ENCODE measurements at regions of chr17 and their contacts with region 1.

Region 1: GRCh38 chr17:44141717-44142285 is at the start of gene HROB:
- DNase-seq: peak; percentile 96
- ATAC-seq: peak; percentile 98
- H3K4me3 Mint-ChIP-seq: peak within 1 kb of the TSS; percentile 84
- H3K27ac Mint-ChIP-seq: peak within 1 kb of the TSS; percentile 70
- H3K4me1 Mint-ChIP-seq: peaks cover 15% of the 10 kb centered on the region
- H3K27me3 Mint-ChIP-seq: peaks cover 8% of the 10 kb centered on the region
- CTCF ChIP-seq: no peak
- total RNA-seq, gene HROB: 2.2 and 5.0 TPM in 2 replicates

Region 2: DNA sequence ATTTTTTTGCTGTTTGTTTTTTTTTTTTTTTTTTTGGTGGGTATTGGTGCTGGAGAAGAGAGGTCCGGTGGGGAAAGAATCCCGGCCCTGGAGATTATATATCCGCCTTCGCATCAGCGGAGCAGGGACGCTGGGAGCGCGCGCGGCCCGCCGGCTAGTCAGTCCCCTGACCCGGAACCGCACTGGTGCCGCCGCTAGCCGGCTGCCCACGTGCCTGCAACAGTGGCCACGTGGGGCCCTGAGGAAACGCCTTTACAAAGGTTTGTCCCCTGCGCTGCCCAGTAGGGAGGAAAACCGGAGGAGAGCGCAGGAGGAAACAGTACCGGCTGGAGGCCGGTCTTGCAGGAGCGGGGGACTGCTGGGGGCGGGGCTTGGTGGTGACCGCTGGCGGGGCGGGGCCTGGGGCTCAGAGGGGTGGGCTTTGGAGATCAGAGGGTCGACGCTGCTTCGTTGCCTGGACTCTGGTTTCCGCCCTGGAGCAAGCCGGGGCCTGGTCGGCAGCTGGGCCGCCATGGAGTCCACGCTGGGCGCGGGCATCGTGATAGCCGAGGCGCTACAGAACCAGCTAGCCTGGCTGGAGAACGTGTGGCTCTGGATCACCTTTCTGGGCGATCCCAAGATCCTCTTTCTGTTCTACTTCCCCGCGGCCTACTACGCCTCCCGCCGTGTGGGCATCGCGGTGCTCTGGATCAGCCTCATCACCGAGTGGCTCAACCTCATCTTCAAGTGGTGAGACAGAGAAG is 71.2 kb before region 1 on chr17 and contains the start of gene G6PC3:
- CTCF ChIA-PET with region 1: no interaction called
- POLR2A ChIA-PET with region 1: no interaction called
- intact Hi-C with region 1: loop called (anchors 1 kb)
- DNase-seq: peak; percentile 73
- ATAC-seq: peak; percentile 73
- H3K4me3 Mint-ChIP-seq: peak within 1 kb of the TSS; percentile 97
- H3K27ac Mint-ChIP-seq: peak within 1 kb of the TSS; percentile 95
- H3K4me1 Mint-ChIP-seq: peaks cover 44% of the 10 kb centered on the region
- H3K27me3 Mint-ChIP-seq: no peaks in the 10 kb centered on the region
- CTCF ChIP-seq: no peak
- total RNA-seq, gene G6PC3: 30.9 and 35.2 TPM in 2 replicates

Region 3: DNA sequence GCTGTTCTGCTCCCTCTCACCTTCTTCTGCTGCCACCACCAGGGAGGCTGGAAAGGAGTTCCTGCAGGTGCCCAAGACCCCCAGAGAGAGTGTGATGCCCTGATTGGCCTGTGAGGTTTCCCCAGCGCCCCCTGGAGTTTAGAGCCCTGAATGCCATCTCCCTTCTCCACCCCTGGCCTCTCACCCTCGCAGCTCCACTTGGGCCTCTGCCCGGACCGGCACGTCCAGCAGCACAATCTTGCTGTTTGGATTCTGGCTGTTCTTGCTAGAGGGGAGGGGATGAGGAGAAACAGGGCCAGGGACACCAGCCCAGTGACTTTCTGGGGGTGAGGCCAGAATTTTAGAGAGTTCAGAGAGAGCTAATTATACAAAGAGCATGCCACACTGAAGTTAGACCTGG is 234.3 kb after region 1 on chr17:
- CTCF ChIA-PET with region 1: no interaction called
- POLR2A ChIA-PET with region 1: no interaction called
- intact Hi-C with region 1: no loop called
- DNase-seq: no peak
- ATAC-seq: no peak
- H3K4me3 Mint-ChIP-seq: no peak overlapping the region
- H3K27ac Mint-ChIP-seq: no peak overlapping the region
- H3K4me1 Mint-ChIP-seq: no peaks in the 10 kb centered on the region
- H3K27me3 Mint-ChIP-seq: peaks cover 30% of the 10 kb centered on the region
- CTCF ChIP-seq: no peak